ENCODE measurements at regions of chr6 and their contacts with region 1.

Region 1: DNA sequence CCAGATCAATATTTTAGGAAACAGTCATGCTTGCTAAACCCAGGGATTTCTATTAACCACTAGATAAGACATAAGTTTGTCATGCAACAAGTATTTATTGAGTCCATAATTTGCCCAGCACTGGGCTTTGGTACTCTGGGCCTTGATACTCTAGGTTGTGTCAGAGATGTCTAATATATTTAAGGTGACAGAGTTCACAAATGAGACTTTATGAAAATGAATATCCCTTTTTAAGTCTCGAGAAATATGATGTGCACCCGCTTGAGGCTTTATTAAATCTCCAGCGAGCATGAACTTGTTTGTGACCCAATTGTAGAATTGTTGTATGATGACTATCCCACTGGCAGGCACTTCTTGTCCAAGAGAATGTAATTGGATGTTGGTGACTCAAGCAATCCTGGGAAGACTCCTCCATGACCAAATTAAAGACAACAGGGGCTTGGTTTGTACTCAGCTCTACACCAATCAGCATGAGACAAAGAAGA is 109.2 kb downstream of the ESR1 start:
- DNase-seq: no peak
- ATAC-seq: no peak
- H3K4me3 ChIP-seq: no peak overlapping the region
- H3K27ac ChIP-seq: no peak overlapping the region
- H3K4me1 ChIP-seq: no peaks in the 10 kb centered on the region
- H3K27me3 ChIP-seq: no peaks in the 10 kb centered on the region
- CTCF ChIP-seq: no peak
- EP300 ChIP-seq: no peak
- POLR2A ChIP-seq: no peak
- RAD21 ChIP-seq: no peak

Region 2: DNA sequence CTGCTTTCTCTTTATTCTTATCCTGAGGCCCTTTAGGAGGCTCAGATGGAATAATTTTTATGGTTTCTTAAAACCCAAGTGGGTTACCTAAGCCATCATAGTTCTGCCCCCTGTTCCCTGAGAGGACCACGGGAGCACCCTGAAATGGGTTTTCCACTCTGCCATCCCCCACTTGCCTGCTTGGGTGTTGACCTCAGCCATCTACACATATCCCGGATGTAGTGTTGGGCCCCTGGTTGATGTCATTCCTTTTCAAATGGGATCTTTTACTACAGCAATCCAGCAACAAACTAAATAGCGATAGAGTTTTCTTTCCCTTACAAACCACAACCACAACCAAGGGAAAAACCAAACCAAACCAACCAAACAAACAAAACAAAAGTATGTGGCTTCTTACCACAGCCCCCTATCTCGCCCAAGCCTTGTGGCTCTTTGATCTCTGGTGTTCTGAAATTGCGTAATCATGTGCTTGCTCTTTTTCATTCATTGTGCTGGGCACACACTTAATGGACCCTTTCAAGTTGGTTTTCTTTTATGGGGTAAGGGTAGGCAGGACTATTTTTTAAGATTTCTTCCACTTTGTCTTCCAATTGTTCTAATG is 45.6 kb after region 1 on chr6:
- CTCF ChIA-PET with region 1: no interaction called
- POLR2A ChIA-PET with region 1: no interaction called
- in situ Hi-C with region 1: loop called (anchors 10 kb)
- intact Hi-C with region 1: no loop called
- DNase-seq: no peak
- ATAC-seq: no peak
- H3K4me3 ChIP-seq: no peak overlapping the region
- H3K27ac ChIP-seq: no peak overlapping the region
- H3K4me1 ChIP-seq: no peaks in the 10 kb centered on the region
- H3K27me3 ChIP-seq: no peaks in the 10 kb centered on the region
- CTCF ChIP-seq: no peak
- EP300 ChIP-seq: no peak
- POLR2A ChIP-seq: no peak
- RAD21 ChIP-seq: no peak

Region 3: DNA sequence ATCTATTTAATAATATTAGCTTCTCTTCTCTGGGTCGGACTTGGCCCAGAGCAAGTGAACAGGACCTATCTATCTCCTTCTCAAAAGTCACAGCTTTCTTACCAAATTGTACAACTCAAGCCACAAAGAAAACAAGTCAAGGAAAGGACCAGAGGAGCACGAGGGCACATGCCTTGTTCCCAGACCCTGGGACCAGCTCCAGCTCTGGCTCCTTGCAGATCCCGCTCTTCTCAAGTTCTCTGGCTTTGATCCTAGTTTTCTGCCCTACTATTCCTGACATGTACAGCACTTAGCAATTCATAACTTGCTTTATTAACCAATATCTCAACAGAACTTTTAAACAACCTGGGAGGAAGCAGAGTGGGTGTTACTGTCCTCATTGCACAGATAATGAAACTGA is 76.6 kb after region 1 on chr6:
- CTCF ChIA-PET with region 1: no interaction called
- POLR2A ChIA-PET with region 1: no interaction called
- in situ Hi-C with region 1: no loop called
- intact Hi-C with region 1: no loop called
- DNase-seq: no peak
- ATAC-seq: no peak
- H3K4me3 ChIP-seq: no peak overlapping the region
- H3K27ac ChIP-seq: no peak overlapping the region
- H3K4me1 ChIP-seq: no peaks in the 10 kb centered on the region
- H3K27me3 ChIP-seq: no peaks in the 10 kb centered on the region
- CTCF ChIP-seq: no peak
- EP300 ChIP-seq: no peak
- POLR2A ChIP-seq: no peak
- RAD21 ChIP-seq: no peak

Measured in K562 (cell line).